ENCODE measurements at regions of chr21 and their contacts with region 1.

Region 1: DNA sequence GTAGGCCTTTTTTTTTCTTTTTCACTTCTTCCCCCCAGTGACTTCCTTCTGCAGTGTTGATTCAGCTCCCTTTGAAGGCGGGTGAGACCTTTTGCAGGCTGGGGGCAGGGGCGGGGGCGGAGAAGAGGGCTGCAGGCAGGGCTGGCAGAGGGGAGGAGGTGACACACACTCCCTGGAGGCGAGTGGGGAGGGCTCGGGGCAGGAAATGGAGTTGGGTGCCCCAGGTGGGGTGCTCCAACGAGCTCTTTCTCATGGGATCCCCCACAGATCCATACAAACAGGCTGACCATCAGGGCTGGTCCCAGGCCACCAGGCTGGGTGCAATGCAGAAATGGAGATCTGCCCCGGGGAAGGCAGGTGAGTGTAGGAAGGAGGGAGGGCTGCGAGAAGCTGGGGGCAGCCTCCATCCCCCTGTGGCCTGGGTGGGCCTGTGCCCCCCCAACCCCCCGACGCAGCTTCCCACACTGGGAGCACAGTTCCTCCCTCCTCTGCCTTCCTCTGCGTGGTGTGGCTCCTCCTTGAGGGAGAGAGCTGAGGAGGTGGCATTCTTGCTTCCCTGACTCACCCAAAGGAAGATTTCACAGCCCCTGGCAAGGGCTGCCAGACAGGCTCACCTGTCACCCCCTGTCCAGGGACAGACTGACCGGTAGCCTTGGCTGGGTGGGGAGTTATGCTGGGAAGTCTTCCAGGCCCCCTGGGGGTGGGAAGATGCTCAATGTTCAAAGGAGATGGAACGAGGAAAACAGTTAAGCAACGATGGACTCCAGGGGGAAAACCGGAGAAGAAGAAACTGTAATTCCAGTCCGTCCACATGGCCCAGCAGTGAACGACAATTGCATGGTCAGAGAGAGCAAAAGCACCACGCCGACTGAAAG is 7.1 kb upstream of the ITGB2 start:
- DNase-seq: peak; percentile 90
- H3K4me3 ChIP-seq: peak overlapping the region; percentile 44
- H3K27ac ChIP-seq: peak overlapping the region; percentile 100
- H3K4me1 ChIP-seq: peaks cover 70% of the 10 kb centered on the region
- H3K27me3 ChIP-seq: no peaks in the 10 kb centered on the region
- CTCF ChIP-seq: peak; percentile 23; the same call in 1 of the 2 replicates

Region 2: DNA sequence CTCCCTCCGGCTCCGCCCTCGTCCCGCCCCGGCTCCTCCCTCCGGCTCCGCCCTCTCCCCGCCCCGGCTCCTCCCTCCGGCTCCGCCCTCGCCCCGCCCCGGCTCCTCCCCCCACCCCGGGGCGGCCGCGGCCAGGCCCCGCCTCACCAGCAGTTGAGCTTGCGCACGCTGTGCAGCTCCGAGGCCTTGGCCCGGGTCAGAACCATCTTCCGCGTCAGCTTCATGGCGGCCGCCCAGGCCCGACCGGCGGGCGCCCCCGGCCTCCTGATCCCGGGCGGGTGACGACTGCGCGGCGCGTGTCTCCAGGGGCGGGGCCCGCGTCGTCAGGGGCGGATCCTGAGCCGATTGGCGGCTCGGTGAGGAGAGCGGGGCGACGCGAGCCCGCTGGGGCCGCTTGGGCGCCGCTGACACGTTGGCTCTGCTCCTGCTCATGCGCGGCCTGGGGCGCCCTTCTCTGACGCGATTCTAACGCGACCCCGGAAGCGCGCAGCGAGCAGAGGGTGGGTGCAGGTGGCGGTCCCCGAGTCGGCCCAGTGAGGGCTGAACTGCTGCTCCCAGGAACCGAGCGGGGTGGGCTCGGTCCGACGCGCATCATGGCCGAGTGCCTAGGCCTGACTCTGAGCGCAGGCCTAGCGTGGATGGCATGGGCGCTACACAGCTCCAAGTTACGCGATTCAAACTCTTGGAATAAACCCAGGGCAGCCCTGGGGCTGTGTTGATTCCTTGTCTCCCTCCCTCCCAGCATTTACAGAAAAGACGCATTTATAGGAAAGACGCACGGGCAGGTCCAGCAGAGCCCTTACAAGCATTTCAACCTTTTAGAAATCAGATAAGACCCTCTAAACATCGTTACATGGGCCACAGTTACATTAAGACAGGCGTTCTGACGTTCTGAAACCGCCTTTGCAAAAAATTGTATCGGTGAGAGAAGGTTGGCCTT is 588.6 kb before region 1 on chr21 and contains the start of gene CFAP410:
- CTCF ChIA-PET with region 1: no interaction called
- POLR2A ChIA-PET with region 1: interaction called, 10 read pairs
- intact Hi-C with region 1: no loop called
- DNase-seq: peak; percentile 96
- H3K4me3 ChIP-seq: peak within 1 kb of the TSS; percentile 62
- H3K27ac ChIP-seq: peak within 1 kb of the TSS; percentile 98
- H3K4me1 ChIP-seq: peaks cover 6% of the 10 kb centered on the region
- H3K27me3 ChIP-seq: no peaks in the 10 kb centered on the region
- CTCF ChIP-seq: no peak
- total RNA-seq, gene CFAP410: 13.3 and 14.0 TPM in 2 replicates

Region 3: GRCh38 chr21:44752634-44753291 is 175.1 kb before region 1 on chr21:
- CTCF ChIA-PET with region 1: no interaction called
- POLR2A ChIA-PET with region 1: no interaction called
- intact Hi-C with region 1: loop called (anchors 5 kb)
- DNase-seq: peak; percentile 83
- H3K4me3 ChIP-seq: peak overlapping the region; percentile 53
- H3K27ac ChIP-seq: peak overlapping the region; percentile 73
- H3K4me1 ChIP-seq: peaks cover 40% of the 10 kb centered on the region
- H3K27me3 ChIP-seq: no peaks in the 10 kb centered on the region
- CTCF ChIP-seq: peak; percentile 46

Region 4: GRCh38 chr21:44801468-44802395 is 126.1 kb before region 1 on chr21 and contains the start of gene UBE2G2:
- CTCF ChIA-PET with region 1: interaction called, 3 read pairs
- POLR2A ChIA-PET with region 1: no interaction called
- intact Hi-C with region 1: loop called (anchors 2 kb)
- DNase-seq: peak; percentile 93
- H3K4me3 ChIP-seq: peak within 1 kb of the TSS; percentile 67
- H3K27ac ChIP-seq: peak within 1 kb of the TSS; percentile 93
- H3K4me1 ChIP-seq: peaks cover 23% of the 10 kb centered on the region
- H3K27me3 ChIP-seq: no peaks in the 10 kb centered on the region
- CTCF ChIP-seq: no peak
- total RNA-seq, gene UBE2G2: 204 and 212 TPM in 2 replicates

Region 5: DNA sequence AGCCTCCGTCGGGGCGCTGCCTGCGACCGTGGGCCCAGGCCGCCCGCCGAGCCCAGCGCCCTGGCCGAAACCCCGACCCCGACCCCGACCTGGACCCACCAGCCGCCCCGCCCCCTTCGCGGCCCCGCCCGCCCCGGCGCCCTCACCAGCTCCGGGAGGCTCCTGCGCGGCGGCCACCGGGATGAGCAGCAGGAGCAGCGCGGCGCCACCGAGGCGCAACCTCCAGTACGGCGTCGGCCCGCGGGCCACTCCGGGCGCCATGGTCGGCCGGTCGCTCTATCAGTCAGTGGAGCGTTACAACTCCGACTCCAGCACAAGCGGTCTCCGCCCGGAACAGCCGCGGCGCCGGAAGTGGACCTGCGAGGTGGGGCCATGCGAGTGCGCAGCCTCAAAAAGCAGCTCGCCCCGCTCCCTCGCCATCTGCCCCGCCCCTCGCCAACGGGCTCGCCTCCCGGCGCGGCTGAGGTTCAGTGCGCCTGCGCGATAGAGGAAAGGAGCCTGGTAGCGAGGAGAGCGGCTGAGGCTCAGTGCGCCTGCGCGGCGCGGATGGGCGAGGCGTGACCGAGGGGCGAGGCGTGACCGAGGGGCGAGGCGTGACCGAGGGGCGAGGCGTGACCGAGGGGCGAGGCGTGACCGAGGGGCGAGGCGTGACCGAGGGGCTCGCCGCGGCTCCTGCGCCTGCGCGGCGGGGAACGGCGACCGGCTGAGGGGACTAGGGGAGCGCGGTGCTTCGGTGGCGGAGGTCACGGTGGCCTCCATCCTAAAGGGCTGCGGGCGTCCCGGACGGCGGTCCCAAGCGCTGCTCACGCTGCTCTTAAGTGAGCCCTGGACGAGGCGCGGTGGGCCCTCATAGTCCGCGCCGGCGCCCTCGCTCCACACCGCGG is 54.2 kb before region 1 on chr21 and contains the start of gene PTTG1IP:
- CTCF ChIA-PET with region 1: no interaction called
- POLR2A ChIA-PET with region 1: interaction called, 12 read pairs
- intact Hi-C with region 1: loop called (anchors 2 kb)
- DNase-seq: peak; percentile 99
- H3K4me3 ChIP-seq: peak within 1 kb of the TSS; percentile 94
- H3K27ac ChIP-seq: peak within 1 kb of the TSS; percentile 88
- H3K4me1 ChIP-seq: peaks cover 40% of the 10 kb centered on the region
- H3K27me3 ChIP-seq: no peaks in the 10 kb centered on the region
- CTCF ChIP-seq: no peak
- total RNA-seq, gene PTTG1IP: 216 and 217 TPM in 2 replicates

Region 6: GRCh38 chr21:44892536-44893277 is 35.1 kb before region 1 on chr21:
- CTCF ChIA-PET with region 1: no interaction called
- POLR2A ChIA-PET with region 1: interaction called, 18 read pairs
- intact Hi-C with region 1: loop called (anchors 5 kb)
- DNase-seq: peak; percentile 76
- H3K4me3 ChIP-seq: no peak overlapping the region
- H3K27ac ChIP-seq: peak overlapping the region; percentile 56
- H3K4me1 ChIP-seq: peaks cover 15% of the 10 kb centered on the region
- H3K27me3 ChIP-seq: no peaks in the 10 kb centered on the region
- CTCF ChIP-seq: peak; percentile 97

Measured in A673 (cell line).